Activated CD4-positive, alpha-beta T cell treated with anti-CD3 and anti-CD28 coated beads for 36 hours (primary cell): ENCODE measurements at regions of chr1 and their contacts with region 1.

Region 1: DNA sequence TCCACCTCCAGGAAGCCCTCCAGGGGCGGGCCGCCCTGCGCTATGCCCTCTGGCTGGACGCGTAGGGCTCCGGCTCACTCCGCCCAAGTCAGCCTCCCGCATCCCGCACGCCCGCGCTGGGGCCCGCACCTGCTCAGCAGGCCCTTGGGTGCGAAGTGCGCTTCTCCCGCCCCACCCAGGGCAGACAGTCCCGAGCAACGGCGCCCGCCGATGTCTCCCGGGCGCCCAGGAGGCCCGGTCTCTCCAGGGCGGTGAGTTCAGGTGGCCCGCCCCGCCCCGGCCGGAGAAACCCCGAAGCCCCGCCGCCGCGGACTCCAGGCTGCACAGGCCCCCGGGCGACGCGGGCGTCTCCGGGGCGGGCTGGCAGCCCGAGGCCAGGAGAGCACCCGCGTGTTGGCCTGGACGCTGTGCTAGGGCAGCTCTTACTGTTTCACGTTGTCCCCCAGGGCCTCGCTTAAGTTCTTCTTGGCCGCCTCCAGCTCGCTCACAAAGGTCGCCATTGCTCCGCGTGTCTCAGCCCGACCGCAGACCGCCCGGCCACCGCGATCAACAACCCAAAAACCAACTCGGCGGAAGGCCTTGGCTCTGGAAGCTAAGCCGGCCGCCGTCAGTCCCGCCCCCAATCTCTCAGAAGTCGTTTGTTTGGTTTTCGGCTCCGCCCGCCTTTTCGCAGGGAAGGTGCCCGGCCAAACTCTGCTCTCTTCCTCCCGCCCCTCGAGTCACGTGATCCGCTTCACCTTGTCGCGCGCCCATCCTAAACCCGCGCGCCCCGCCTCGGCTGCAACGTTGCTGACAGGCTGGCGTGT is at the start of gene TADA1:
- DNase-seq: peak; percentile 100
- ATAC-seq: peak; percentile 91
- H3K4me3 Mint-ChIP-seq: peak within 1 kb of the TSS; percentile 92
- H3K27ac Mint-ChIP-seq: peak within 1 kb of the TSS; percentile 97
- H3K4me1 Mint-ChIP-seq: peaks cover 45% of the 10 kb centered on the region
- H3K27me3 Mint-ChIP-seq: no peaks in the 10 kb centered on the region
- total RNA-seq, gene TADA1: 16.0 to 19.5 TPM

Region 2: DNA sequence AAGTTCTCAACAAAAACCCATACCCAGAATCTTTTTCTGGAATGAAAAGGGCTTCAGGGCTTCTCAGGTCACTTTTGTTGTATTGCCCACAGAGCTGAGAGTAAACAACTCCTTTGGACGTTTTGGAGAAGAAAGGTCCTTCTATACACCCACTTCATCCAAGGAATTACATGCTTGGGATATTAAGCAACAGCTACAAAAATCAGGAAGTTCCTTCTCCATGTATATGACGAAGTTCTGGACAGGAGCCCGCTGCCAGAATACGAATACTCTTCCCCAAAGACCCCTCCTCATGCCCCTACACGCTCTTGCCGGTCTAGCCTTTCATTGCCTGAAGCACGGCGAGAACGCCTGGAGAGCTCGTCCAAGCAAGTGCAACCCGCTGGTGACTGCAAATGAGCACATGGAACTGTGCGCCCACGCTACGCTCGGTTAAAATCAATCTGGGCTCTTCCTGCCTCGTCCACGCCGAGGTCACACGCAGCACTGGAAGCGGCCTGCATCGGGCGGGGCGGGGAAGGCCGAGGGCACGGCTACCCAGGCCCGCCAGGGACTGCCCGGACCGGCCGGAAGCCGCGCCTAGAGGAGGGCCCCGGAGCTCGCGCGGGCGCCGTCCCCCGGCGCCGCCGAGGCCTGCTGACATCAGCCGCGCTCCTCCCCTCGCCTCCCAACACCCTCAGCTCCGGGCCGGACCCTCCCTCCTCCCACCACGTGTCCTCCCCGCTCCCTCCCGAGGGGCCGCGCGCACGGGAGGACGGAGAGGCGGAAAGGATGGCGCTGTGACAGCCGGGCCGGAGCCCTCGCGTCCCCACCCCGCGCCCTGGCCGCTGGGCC is 37.0 kb before region 1 on chr1 and contains the start of gene POGK:
- CTCF ChIA-PET with region 1: interaction called, 12 read pairs
- POLR2A ChIA-PET with region 1: interaction called, 13 read pairs
- intact Hi-C with region 1: loop called (anchors 1 kb)
- DNase-seq: peak; percentile 93
- ATAC-seq: peak; percentile 97
- H3K4me3 Mint-ChIP-seq: peak within 1 kb of the TSS; percentile 90
- H3K27ac Mint-ChIP-seq: peak within 1 kb of the TSS; percentile 98
- H3K4me1 Mint-ChIP-seq: peaks cover 56% of the 10 kb centered on the region
- H3K27me3 Mint-ChIP-seq: no peaks in the 10 kb centered on the region
- total RNA-seq, gene POGK: 36.2 to 40.6 TPM

Region 3: DNA sequence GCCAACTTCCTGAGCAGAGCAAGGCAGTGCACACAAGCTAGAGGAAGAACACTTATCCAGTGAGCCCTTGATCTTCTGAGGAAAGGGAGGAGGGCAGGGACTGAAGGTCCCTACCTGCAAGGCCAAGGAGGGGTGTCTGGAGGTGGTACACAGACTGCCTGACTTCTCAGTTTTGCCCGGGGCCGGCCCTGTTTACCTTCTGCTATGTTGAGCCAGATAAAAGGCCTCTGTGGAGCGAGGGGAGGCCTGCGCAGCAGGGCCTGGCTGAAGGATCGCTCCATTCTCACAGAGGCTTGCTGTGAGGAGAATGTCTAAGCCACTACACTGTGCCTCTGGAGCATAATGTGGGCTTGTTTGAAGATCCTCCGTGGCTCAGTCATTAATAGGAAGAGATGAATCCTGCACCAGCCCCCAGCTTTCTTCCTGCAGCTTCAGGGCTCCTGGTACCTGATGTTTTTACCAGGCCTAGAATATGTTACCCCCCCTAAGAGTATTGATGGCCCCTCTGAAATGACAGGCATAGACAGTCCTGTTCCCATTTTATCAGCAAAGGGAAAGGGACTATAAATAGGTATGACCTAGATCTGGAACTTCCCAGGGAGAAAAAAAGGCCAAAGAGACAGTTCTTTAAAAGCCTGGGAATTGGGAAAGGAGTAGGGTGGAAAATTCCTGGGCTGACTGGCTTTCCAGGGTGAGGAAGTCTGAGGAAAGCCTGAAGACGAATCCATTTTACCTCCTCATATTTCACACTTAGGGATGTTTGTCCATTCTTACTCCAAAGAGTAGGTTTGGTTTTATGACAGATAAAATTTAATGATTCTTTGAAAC is 32.0 kb before region 1 on chr1:
- CTCF ChIA-PET with region 1: interaction called, 12 read pairs
- POLR2A ChIA-PET with region 1: interaction called, 13 read pairs
- intact Hi-C with region 1: loop called (anchors 1 kb)
- DNase-seq: no peak
- ATAC-seq: no peak
- H3K4me3 Mint-ChIP-seq: no peak overlapping the region
- H3K27ac Mint-ChIP-seq: peak overlapping the region; percentile 73
- H3K4me1 Mint-ChIP-seq: peaks cover 75% of the 10 kb centered on the region
- H3K27me3 Mint-ChIP-seq: no peaks in the 10 kb centered on the region